ENCODE measurements at regions of chr10 and their contacts with region 1.

Region 1: GRCh38 chr10:34861293-34862021 is 46.4 kb upstream of the PARD3 start:
- DNase-seq: peak; percentile 98
- ATAC-seq: peak; percentile 98
- H3K4me3 ChIP-seq: no peak overlapping the region; the same call in 1 of the 2 replicates
- H3K27ac ChIP-seq: peak overlapping the region; percentile 3; the same call in 1 of the 2 replicates
- H3K4me1 ChIP-seq: peaks cover 27% of the 10 kb centered on the region
- H3K27me3 ChIP-seq: no peaks in the 10 kb centered on the region
- CTCF ChIP-seq: no peak

Region 2: GRCh38 chr10:34884272-34884952 is 23.0 kb after region 1 on chr10:
- CTCF ChIA-PET with region 1: no interaction called
- POLR2A ChIA-PET with region 1: no interaction called
- intact Hi-C with region 1: loop called (anchors 1 kb)
- DNase-seq: peak; percentile 66
- ATAC-seq: no peak
- H3K4me3 ChIP-seq: no peak overlapping the region
- H3K27ac ChIP-seq: no peak overlapping the region
- H3K4me1 ChIP-seq: peaks cover 25% of the 10 kb centered on the region
- H3K27me3 ChIP-seq: no peaks in the 10 kb centered on the region
- CTCF ChIP-seq: no peak

Region 3: DNA sequence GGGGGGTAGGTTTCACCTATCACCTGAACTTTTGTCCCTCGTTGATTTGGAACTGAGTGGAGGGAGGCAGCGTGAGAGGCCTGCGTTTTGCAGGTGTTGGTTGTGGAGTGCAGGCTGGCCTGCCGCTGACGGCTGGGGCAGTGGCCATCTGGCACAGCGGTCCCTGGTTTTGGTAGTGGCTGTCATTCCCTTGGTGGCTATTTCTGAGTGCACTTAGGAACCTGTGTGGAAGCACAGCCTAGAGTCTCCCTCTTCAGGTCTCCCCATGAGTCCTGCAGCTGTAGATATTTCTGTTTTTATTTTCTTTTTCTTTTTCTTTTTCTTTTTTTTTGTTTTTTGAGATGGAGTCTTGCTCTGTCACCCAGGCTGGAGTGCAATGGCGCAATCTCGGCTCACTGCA is 99.5 kb after region 1 on chr10:
- CTCF ChIA-PET with region 1: no interaction called
- POLR2A ChIA-PET with region 1: no interaction called
- intact Hi-C with region 1: loop called (anchors 5 kb)
- DNase-seq: peak; percentile 66
- ATAC-seq: peak; percentile 83
- H3K4me3 ChIP-seq: no peak overlapping the region
- H3K27ac ChIP-seq: no peak overlapping the region
- H3K4me1 ChIP-seq: 0 out of 2 replicates have a peak, but pooled peaks cover 3% of the 10 kb centered on the region
- H3K27me3 ChIP-seq: no peaks in the 10 kb centered on the region
- CTCF ChIP-seq: peak; percentile 79

Region 4: GRCh38 chr10:35195361-35196306 is 334.2 kb after region 1 on chr10:
- CTCF ChIA-PET with region 1: no interaction called
- POLR2A ChIA-PET with region 1: no interaction called
- intact Hi-C with region 1: no loop called
- DNase-seq: peak; percentile 99
- ATAC-seq: peak; percentile 96
- H3K4me3 ChIP-seq: peak overlapping the region; percentile 60
- H3K27ac ChIP-seq: peak overlapping the region; percentile 78
- H3K4me1 ChIP-seq: peaks cover 17% of the 10 kb centered on the region
- H3K27me3 ChIP-seq: no peaks in the 10 kb centered on the region
- CTCF ChIP-seq: peak; percentile 100